ENCODE measurements at regions of chr5 and their contacts with region 1.

Region 1: GRCh38 chr5:132820162-132820754 is 7.2 kb downstream of the SOWAHA start:
- DNase-seq: peak; percentile 65
- ATAC-seq: peak; percentile 97
- H3K4me3 ChIP-seq: no peak overlapping the region
- H3K27ac ChIP-seq: no peak overlapping the region
- H3K4me1 ChIP-seq: no peaks in the 10 kb centered on the region; the same call in 1 of the 2 replicates
- H3K27me3 ChIP-seq: no peaks in the 10 kb centered on the region; a peak in 2 of 4 replicates
- CTCF ChIP-seq: peak; percentile 89 to 94 (median 89)
- EP300 ChIP-seq: no peak
- POLR2A ChIP-seq: no peak
- RAD21 ChIP-seq: peak; percentile 87

Region 2: DNA sequence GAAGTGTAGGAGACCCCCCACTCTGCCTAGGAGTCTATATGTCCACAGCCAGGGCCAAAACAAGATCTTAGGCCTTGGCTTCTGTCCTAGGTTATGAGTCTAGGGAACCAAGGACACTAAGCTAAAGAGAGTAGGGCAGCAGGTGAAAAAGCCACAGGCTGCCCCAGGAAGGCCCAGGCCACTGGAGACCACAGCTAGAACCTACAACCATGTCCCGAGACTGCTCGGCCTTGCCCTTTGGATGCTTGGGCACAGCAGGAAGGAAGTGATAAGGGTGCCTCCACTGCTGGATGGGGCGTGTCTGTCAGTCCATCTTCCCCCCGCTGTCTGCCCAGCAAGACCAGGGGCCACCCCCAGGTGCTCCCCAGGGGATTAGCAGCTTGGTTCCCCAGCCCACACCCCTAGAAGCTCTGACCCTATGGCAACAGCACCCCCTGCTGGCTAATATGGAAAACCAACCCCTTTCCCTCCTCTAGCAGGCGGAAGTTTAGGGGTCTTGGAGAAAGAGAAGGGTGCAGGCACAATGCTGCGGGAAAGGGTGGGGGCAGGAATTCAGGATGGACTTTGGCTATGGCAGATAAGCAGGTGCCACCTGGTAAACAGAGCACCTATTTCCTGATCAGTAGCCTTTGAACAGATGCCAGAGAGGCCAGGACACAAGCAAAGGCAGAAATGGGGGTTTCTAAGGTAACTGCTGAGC is 319.2 kb before region 1 on chr5:
- CTCF ChIA-PET with region 1: interaction called, 65 read pairs
- POLR2A ChIA-PET with region 1: no interaction called
- RAD21 ChIA-PET with region 1: interaction called, 40 read pairs
- SMC1A ChIA-PET with region 1: interaction called, 24 read pairs
- in situ Hi-C with region 1: no loop called
- intact Hi-C with region 1: loop called (anchors 2 kb)
- DNase-seq: no peak
- ATAC-seq: peak; percentile 55
- H3K4me3 ChIP-seq: no peak overlapping the region
- H3K27ac ChIP-seq: peak overlapping the region; percentile 42; the same call in 1 of the 2 replicates
- H3K4me1 ChIP-seq: peaks cover 34% of the 10 kb centered on the region
- H3K27me3 ChIP-seq: no peaks in the 10 kb centered on the region
- CTCF ChIP-seq: peak; percentile 80 to 94 (median 85); a peak in 5 of 6 replicates
- EP300 ChIP-seq: 0 out of 4 replicates have a peak, but pooled peaks of 1 of the 2 experiments have one; percentile 11
- POLR2A ChIP-seq: no peak
- RAD21 ChIP-seq: peak; percentile 100

Region 3: DNA sequence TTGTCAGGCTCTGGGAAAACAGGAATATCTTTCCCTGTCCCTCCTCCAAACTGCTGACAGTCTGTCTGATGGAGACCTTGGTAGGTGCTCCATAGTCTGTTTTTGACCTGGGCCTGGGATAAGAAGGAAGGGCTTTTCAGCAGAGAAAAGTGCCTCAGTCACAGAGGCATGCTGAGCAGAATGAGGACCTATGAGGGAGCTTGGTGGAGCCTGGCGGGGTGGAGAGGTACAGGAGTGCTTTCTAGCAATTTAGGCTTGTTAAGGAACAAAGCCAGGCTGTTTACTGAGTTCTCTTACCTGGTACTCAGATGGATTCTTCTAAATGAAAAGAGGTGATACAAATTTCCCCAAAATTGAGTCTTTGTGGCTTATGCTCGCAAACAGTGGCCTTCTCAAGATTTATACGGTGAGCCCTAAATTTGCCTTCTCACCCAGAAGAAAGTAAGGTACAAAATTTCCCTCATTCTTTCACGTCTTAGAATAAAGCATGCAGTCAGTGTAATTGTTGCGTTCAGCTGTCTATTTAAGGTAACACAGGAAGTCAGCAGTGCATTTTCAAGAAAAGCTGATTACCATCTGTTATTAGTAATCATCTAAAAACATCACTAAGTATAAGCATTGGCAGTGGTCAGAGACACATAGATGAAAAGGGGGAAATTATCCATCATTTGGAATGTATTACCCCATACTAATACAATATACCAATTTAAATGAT is 190.9 kb before region 1 on chr5:
- CTCF ChIA-PET with region 1: interaction called, 6 read pairs
- POLR2A ChIA-PET with region 1: no interaction called
- RAD21 ChIA-PET with region 1: interaction called, 4 read pairs
- SMC1A ChIA-PET with region 1: interaction called, 11 read pairs
- in situ Hi-C with region 1: no loop called
- intact Hi-C with region 1: no loop called
- DNase-seq: no peak
- ATAC-seq: peak; percentile 86
- H3K4me3 ChIP-seq: no peak overlapping the region; the same call in 1 of the 2 replicates
- H3K27ac ChIP-seq: peak overlapping the region; percentile 70
- H3K4me1 ChIP-seq: peaks cover 11% of the 10 kb centered on the region; the same call in 1 of the 2 replicates
- H3K27me3 ChIP-seq: no peaks in the 10 kb centered on the region
- CTCF ChIP-seq: no peak
- EP300 ChIP-seq: no peak
- POLR2A ChIP-seq: no peak
- RAD21 ChIP-seq: no peak

Region 4: DNA sequence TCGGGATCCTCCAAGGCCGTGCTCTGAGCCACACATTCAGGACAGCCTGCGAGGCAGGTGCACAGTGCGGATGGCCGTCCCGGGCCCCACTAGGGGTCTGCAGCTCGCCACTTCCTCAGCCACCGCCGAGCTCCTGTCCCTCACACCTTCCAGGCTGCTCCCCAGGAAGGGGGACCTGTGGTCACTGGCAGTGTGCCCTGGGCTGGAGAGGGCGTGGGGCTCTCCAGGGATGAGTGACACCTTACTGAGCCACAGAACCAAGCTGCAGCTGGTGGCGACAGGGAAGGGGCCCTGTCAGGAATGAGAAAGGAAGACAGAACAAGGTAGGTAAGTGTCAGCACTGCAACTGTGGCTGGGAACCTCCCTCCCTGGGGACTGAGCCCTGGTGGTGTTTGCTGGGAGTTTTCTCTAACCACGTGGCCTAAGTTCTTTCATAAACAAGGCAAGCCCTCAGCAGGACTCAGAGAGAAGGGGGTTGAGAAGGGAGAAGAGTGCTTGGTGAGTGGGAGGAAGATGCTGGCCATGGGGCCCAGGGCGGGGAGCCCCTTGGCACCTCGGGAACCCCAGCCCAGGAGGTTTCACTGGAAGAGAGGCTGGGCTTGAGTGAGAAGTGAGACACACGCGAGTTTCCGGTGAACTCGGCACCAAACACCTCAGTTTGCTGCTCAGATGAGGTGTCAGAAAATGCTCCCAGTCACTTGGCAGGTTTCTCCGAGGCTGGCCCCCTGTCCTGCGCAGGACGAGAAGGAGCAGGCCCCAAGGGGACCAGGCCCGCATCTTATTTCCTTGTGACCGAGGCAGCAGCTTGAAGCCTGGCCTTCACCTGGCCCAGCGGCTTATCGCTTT is 157.1 kb before region 1 on chr5:
- CTCF ChIA-PET with region 1: interaction called, 58 read pairs
- POLR2A ChIA-PET with region 1: no interaction called
- RAD21 ChIA-PET with region 1: interaction called, 30 read pairs
- SMC1A ChIA-PET with region 1: interaction called, 55 read pairs
- in situ Hi-C with region 1: no loop called
- intact Hi-C with region 1: loop called (anchors 1 kb)
- DNase-seq: peak; percentile 99
- ATAC-seq: peak; percentile 72
- H3K4me3 ChIP-seq: no peak overlapping the region
- H3K27ac ChIP-seq: peak overlapping the region; percentile 96
- H3K4me1 ChIP-seq: peaks cover 61% of the 10 kb centered on the region
- H3K27me3 ChIP-seq: no peaks in the 10 kb centered on the region
- CTCF ChIP-seq: 0 out of 6 replicates have a peak, but pooled peaks of 2 of the 3 experiments have one; percentile 1 to 2
- EP300 ChIP-seq: peak; percentile 85 to 90; a peak in 3 of 4 replicates
- POLR2A ChIP-seq: peak; percentile 65; the same call in 1 of the 2 replicates
- RAD21 ChIP-seq: peak; percentile 18; the same call in 1 of the 2 replicates

Region 5: GRCh38 chr5:132736853-132737833 is 83.1 kb before region 1 on chr5 and contains the start of gene KIF3A:
- CTCF ChIA-PET with region 1: interaction called, 22 read pairs
- POLR2A ChIA-PET with region 1: no interaction called
- RAD21 ChIA-PET with region 1: interaction called, 10 read pairs
- SMC1A ChIA-PET with region 1: interaction called, 5 read pairs
- in situ Hi-C with region 1: no loop called
- intact Hi-C with region 1: loop called (anchors 5 kb)
- DNase-seq: peak; percentile 94
- ATAC-seq: peak; percentile 91
- H3K4me3 ChIP-seq: peak within 1 kb of the TSS; percentile 80
- H3K27ac ChIP-seq: peak within 1 kb of the TSS; percentile 52
- H3K4me1 ChIP-seq: no peaks in the 10 kb centered on the region
- H3K27me3 ChIP-seq: no peaks in the 10 kb centered on the region
- CTCF ChIP-seq: no peak
- EP300 ChIP-seq: no peak
- POLR2A ChIP-seq: peak; percentile 89
- RAD21 ChIP-seq: no peak
- polyA plus RNA-seq, gene KIF3A: 2.7 to 3.0 TPM

Region 6: GRCh38 chr5:132777209-132778069 is 42.8 kb before region 1 on chr5 and contains the start of gene SEPTIN8:
- CTCF ChIA-PET with region 1: interaction called, 7 read pairs
- POLR2A ChIA-PET with region 1: interaction called, 6 read pairs
- RAD21 ChIA-PET with region 1: interaction called, 10 read pairs
- SMC1A ChIA-PET with region 1: interaction called, 7 read pairs
- in situ Hi-C with region 1: no loop called
- intact Hi-C with region 1: no loop called
- DNase-seq: no peak
- ATAC-seq: peak; percentile 74
- H3K4me3 ChIP-seq: peak within 1 kb of the TSS; percentile 83
- H3K27ac ChIP-seq: peak within 1 kb of the TSS; percentile 50
- H3K4me1 ChIP-seq: peaks cover 7% of the 10 kb centered on the region
- H3K27me3 ChIP-seq: no peaks in the 10 kb centered on the region
- CTCF ChIP-seq: no peak
- EP300 ChIP-seq: no peak
- POLR2A ChIP-seq: 0 out of 2 replicates have a peak, but pooled peaks have one; percentile 8
- RAD21 ChIP-seq: no peak
- polyA plus RNA-seq, gene SEPTIN8: 6.1 to 7.6 TPM

Region 7: GRCh38 chr5:132883261-132883834 is 63.1 kb after region 1 on chr5:
- CTCF ChIA-PET with region 1: interaction called, 15 read pairs
- POLR2A ChIA-PET with region 1: no interaction called
- RAD21 ChIA-PET with region 1: interaction called, 3 read pairs
- SMC1A ChIA-PET with region 1: interaction called, 5 read pairs
- in situ Hi-C with region 1: no loop called
- intact Hi-C with region 1: no loop called
- DNase-seq: no peak
- ATAC-seq: peak; percentile 96
- H3K4me3 ChIP-seq: no peak overlapping the region
- H3K27ac ChIP-seq: no peak overlapping the region
- H3K4me1 ChIP-seq: no peaks in the 10 kb centered on the region
- H3K27me3 ChIP-seq: no peaks in the 10 kb centered on the region
- CTCF ChIP-seq: peak; percentile 61 to 78 (median 67)
- EP300 ChIP-seq: no peak
- POLR2A ChIP-seq: no peak
- RAD21 ChIP-seq: peak; percentile 64